Activated B cell treated with CpG ODN at 0.5 μM for 24 hours (primary cell): ENCODE measurements at regions of chr7 and their contacts with region 1.

Region 1: DNA sequence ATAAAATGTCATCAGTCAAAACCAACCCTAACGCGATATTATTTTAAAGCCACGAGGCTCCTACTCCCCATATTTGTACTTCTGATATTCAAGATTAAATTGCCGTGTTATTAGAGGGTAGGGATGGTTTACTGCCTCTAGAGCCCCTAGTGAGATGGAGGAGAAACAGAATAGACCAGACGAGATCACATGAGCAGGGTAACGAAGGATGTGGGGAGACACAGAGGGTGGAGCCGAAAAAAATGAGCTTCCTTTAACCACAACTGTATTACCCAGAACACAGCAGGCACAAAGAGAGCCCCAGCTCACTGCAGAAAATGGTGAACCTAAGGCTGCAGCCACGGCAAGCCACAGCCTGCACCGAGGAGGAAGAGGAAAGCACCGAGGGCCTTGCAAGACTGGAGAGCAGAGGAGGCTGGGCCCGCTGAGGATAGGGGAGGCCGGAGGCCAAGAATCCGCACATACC is 14.3 kb downstream of the ZC3HAV1 start:
- DNase-seq: peak; percentile 44
- ATAC-seq: peak; percentile 96
- H3K4me3 Mint-ChIP-seq: peak overlapping the region; percentile 63
- H3K27ac Mint-ChIP-seq: peak overlapping the region; percentile 94
- H3K4me1 Mint-ChIP-seq: peaks cover 78% of the 10 kb centered on the region
- H3K27me3 Mint-ChIP-seq: no peaks in the 10 kb centered on the region
- CTCF ChIP-seq: no peak

Region 2: GRCh38 chr7:138449580-138449979 is 645.6 kb before region 1 on chr7:
- CTCF ChIA-PET with region 1: no interaction called
- POLR2A ChIA-PET with region 1: no interaction called
- intact Hi-C with region 1: no loop called
- DNase-seq: no peak
- ATAC-seq: no peak
- H3K4me3 Mint-ChIP-seq: no peak overlapping the region
- H3K27ac Mint-ChIP-seq: no peak overlapping the region
- H3K4me1 Mint-ChIP-seq: no peaks in the 10 kb centered on the region
- H3K27me3 Mint-ChIP-seq: no peaks in the 10 kb centered on the region
- CTCF ChIP-seq: no peak

Region 3: DNA sequence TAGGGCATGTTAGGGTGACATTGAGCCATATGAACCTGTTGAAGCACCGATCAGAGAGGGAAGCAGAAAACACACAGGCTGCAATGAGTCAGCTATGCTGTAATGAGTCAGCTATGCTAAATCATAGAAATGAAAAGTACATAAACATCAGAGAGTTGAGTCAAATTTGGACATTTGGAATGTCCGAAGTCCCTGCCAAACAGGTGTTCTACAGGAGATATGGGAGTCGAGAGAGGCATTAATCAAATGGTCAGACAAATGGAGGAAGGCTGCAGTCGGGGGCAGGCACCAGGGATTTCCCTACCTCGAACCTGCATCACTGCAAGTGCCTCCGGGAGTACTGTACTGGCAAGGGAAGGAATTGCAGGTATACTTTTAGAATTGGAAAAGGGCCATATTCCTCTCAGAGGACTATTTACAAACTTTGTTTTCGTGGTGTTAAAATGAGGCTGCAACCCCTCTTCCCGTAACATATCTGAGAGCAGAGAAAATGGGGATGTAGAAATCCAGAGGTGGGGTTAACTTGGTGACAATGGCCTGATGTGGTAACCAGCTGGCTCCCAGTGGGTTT is 23.1 kb after region 1 on chr7:
- CTCF ChIA-PET with region 1: no interaction called
- POLR2A ChIA-PET with region 1: interaction called, 26 read pairs
- intact Hi-C with region 1: loop called (anchors 1 kb)
- DNase-seq: no peak
- ATAC-seq: peak; percentile 23
- H3K4me3 Mint-ChIP-seq: peak overlapping the region; percentile 68
- H3K27ac Mint-ChIP-seq: peak overlapping the region; percentile 91
- H3K4me1 Mint-ChIP-seq: peaks cover 31% of the 10 kb centered on the region
- H3K27me3 Mint-ChIP-seq: no peaks in the 10 kb centered on the region
- CTCF ChIP-seq: no peak

Region 4: GRCh38 chr7:139133335-139134139 is 38.3 kb after region 1 on chr7:
- CTCF ChIA-PET with region 1: interaction called, 3 read pairs
- POLR2A ChIA-PET with region 1: interaction called, 19 read pairs
- intact Hi-C with region 1: loop called (anchors 1 kb)
- DNase-seq: peak; percentile 77
- ATAC-seq: peak; percentile 98
- H3K4me3 Mint-ChIP-seq: peak overlapping the region; percentile 87
- H3K27ac Mint-ChIP-seq: peak overlapping the region; percentile 81
- H3K4me1 Mint-ChIP-seq: peaks cover 9% of the 10 kb centered on the region
- H3K27me3 Mint-ChIP-seq: no peaks in the 10 kb centered on the region
- CTCF ChIP-seq: no peak

Region 5: DNA sequence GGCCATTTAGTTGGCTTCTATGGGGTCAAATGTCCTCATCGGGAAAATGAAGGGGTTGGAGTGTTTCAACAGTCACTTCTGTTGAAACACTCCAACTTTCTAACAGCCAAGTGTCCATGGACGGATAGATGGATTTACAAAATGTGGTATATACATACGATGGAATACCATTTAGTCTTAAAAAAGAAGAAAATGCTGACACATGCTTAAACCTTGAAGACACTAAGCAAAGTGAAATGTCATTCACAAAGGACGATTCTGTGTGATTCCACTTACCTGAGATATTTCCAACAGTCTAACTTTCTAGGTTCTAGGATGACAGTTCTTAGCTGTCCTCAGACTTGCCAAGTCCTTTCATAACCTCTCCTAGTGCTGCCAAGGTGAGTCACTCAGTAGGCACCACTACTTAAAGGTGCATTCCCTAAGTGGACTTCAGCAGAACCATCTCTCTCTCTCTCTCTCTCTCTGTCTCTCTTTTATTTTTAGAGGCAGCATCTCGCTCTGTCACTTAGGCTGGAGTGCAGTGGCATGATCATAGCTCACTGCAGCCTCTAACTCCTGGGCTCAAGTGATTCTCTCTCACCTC is 1476.4 kb after region 1 on chr7:
- CTCF ChIA-PET with region 1: no interaction called
- POLR2A ChIA-PET with region 1: interaction called, 10 read pairs
- intact Hi-C with region 1: no loop called
- DNase-seq: no peak
- ATAC-seq: no peak
- H3K4me3 Mint-ChIP-seq: no peak overlapping the region
- H3K27ac Mint-ChIP-seq: no peak overlapping the region
- H3K4me1 Mint-ChIP-seq: no peaks in the 10 kb centered on the region
- H3K27me3 Mint-ChIP-seq: peaks cover 13% of the 10 kb centered on the region
- CTCF ChIP-seq: no peak